ENCODE measurements at regions of chr19 and their contacts with region 1.

Region 1: GRCh38 chr19:4267101-4267900 is 11.8 kb upstream of the SHD start:
- DNase-seq: peak; percentile 46 to 72
- ATAC-seq: peak; percentile 22 to 58 (median 43)
- H3K4me3 ChIP-seq: no peak overlapping the region
- H3K4me3 Mint-ChIP-seq: peak overlapping the region; percentile 26
- H3K27ac ChIP-seq: no peak overlapping the region
- H3K27ac Mint-ChIP-seq: peak overlapping the region in 1 of 2 donors; percentile 88
- H3K4me1 ChIP-seq: peaks cover 49% of the 10 kb centered on the region
- H3K4me1 Mint-ChIP-seq: peaks cover 32 to 48% of the 10 kb centered on the region in 2 donors
- H3K27me3 ChIP-seq: no peaks in the 10 kb centered on the region
- H3K27me3 Mint-ChIP-seq: no peaks in the 10 kb centered on the region
- CTCF ChIP-seq: peak; percentile 79

Region 2: GRCh38 chr19:4304530-4305252 is 37.4 kb after region 1 on chr19 and contains the start of gene FSD1:
- intact Hi-C with region 1: loop called (anchors 5 kb)
- DNase-seq: peak; percentile 66 to 73
- ATAC-seq: peak; percentile 68 to 74 (median 69)
- H3K4me3 ChIP-seq: peak within 1 kb of the TSS; percentile 1
- H3K4me3 Mint-ChIP-seq: peak within 1 kb of the TSS; percentile 86
- H3K27ac ChIP-seq: peak within 1 kb of the TSS; percentile 92
- H3K27ac Mint-ChIP-seq: peak within 1 kb of the TSS; percentile 80 to 94
- H3K4me1 ChIP-seq: peaks cover 46% of the 10 kb centered on the region
- H3K4me1 Mint-ChIP-seq: peaks cover 25 to 44% of the 10 kb centered on the region in 2 donors
- H3K27me3 ChIP-seq: no peaks in the 10 kb centered on the region
- H3K27me3 Mint-ChIP-seq: no peaks in the 10 kb centered on the region
- CTCF ChIP-seq: no peak
- total RNA-seq, gene FSD1: 15.5 to 18.2 (median 16.4) TPM

Region 3: DNA sequence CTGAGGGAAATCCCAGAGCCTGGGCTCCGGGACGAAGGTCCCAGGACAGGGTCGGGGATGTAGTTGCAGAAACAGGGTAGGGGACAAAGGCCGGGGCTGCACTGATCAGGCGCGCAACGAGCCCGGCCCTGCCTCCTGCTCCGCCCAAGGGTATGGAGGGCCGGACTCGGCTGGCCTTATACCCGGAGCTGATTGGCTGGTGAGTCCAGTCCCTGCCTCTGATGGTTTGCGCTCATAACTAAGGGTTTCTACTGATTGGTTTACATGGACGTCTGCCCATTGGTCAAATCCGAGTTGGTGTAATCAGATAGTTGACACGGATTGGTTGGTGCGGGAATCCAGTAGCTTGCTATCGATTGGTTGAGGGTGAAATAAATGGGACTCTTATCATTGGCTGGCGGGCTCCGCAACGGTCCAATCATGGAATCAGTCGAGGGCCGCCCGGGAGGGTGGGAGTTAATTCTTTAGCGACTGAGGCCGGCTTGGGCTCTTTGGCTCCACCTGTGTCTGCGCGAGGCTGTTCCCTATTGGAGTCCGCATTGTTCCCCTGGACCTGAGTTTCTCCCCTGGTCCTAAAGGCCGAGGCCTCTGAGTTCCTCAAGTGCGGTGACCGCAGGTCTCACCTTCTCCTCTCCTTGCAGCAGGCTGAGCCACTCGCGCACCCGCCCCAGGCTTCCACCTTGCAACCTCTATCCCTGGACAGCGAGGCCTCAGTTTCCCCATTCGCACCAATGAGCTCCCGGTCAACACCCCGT is 75.5 kb after region 1 on chr19:
- intact Hi-C with region 1: loop called (anchors 2 kb)
- DNase-seq: peak; percentile 87 to 98
- ATAC-seq: peak; percentile 79 to 92 (median 80)
- H3K4me3 ChIP-seq: peak overlapping the region; percentile 90
- H3K4me3 Mint-ChIP-seq: peak overlapping the region; percentile 93
- H3K27ac ChIP-seq: peak overlapping the region; percentile 89
- H3K27ac Mint-ChIP-seq: peak overlapping the region; percentile 79 to 92
- H3K4me1 ChIP-seq: peaks cover 51% of the 10 kb centered on the region
- H3K4me1 Mint-ChIP-seq: peaks cover 24 to 59% of the 10 kb centered on the region in 2 donors
- H3K27me3 ChIP-seq: no peaks in the 10 kb centered on the region
- H3K27me3 Mint-ChIP-seq: no peaks in the 10 kb centered on the region
- CTCF ChIP-seq: peak; percentile 27

Region 4: GRCh38 chr19:4352701-4353121 is 85.4 kb after region 1 on chr19:
- intact Hi-C with region 1: loop called (anchors 1 kb)
- DNase-seq: peak; percentile 53 to 85
- ATAC-seq: peak; percentile 80 to 91 (median 87)
- H3K4me3 ChIP-seq: no peak overlapping the region
- H3K4me3 Mint-ChIP-seq: no peak overlapping the region
- H3K27ac ChIP-seq: no peak overlapping the region
- H3K27ac Mint-ChIP-seq: peak overlapping the region in 1 of 2 donors; percentile 68
- H3K4me1 ChIP-seq: peaks cover 27% of the 10 kb centered on the region
- H3K4me1 Mint-ChIP-seq: peaks cover 2 to 23% of the 10 kb centered on the region in 2 donors
- H3K27me3 ChIP-seq: no peaks in the 10 kb centered on the region
- H3K27me3 Mint-ChIP-seq: no peaks in the 10 kb centered on the region
- CTCF ChIP-seq: peak; percentile 85

Region 5: GRCh38 chr19:4524808-4525562 is 257.7 kb after region 1 on chr19:
- intact Hi-C with region 1: loop called (anchors 10 kb)
- DNase-seq: peak; percentile 56 to 76
- ATAC-seq: peak; percentile 62 to 83 (median 82)
- H3K4me3 ChIP-seq: no peak overlapping the region
- H3K4me3 Mint-ChIP-seq: no peak overlapping the region
- H3K27ac ChIP-seq: no peak overlapping the region
- H3K27ac Mint-ChIP-seq: no peak overlapping the region
- H3K4me1 ChIP-seq: no peaks in the 10 kb centered on the region
- H3K4me1 Mint-ChIP-seq: no peaks in the 10 kb centered on the region
- H3K27me3 ChIP-seq: no peaks in the 10 kb centered on the region
- H3K27me3 Mint-ChIP-seq: peaks cover 0 to 8% of the 10 kb centered on the region in 2 donors
- CTCF ChIP-seq: peak; percentile 61